Naive thymus-derived CD8-positive, alpha-beta T cell (primary cell): ENCODE measurements at regions of chr20 and their contacts with region 1.

Region 1: DNA sequence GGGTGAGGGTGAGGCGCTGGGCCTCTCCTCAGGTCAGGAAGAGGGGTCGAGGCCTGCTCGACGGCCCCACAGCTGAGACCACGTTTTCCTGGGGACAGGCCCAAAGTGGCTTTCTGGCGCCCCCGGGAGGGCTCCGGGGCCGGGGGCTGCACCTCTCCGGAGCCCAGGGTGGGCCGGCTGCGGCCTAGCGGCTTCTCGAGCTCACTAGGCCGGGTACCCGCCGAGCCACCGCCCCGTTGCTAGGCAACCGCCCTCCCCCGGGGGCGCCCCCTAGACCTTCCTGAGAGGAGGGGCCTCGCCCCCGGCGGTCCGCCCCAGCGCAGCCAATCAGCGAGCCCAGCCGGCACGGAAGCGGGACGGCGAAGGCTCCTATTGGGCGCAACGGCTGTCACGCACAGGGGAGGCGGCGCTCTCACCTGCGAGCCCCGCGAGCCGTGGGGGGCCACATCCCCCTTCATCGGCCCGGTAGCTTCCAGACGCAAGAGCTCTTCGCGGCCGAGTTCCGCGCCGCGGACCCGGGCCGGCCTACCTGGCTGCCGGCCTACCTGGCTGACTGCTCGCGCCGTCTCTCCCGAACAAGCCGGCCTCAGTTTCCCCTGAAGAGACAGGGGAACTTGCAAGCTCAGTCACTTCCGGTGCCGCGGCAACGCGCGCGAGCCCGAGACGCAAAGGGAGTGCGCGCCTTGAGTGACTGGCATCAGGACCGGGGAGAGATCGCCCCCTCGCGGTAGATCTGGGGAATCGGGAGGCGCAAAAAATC is 831 bp upstream of the BCL2L1 start:
- DNase-seq: peak; percentile 98 to 100 (median 99)
- ATAC-seq: peak; percentile 92 to 95
- H3K4me3 Mint-ChIP-seq: peak overlapping the region; percentile 90 to 96 (median 93)
- H3K27ac Mint-ChIP-seq: peak overlapping the region; percentile 73 to 98 (median 94)
- H3K4me1 Mint-ChIP-seq: peaks cover 29 to 52% (median 44%) of the 10 kb centered on the region in 4 donors
- H3K27me3 Mint-ChIP-seq: no peaks in the 10 kb centered on the region

Region 2: GRCh38 chr20:31572701-31573554 is 150.6 kb before region 1 on chr20:
- POLR2A ChIA-PET with region 1: interaction called, 14 read pairs
- DNase-seq: peak; percentile 65 to 88 (median 82)
- ATAC-seq: peak; percentile 86 to 87
- H3K4me3 Mint-ChIP-seq: peak overlapping the region; percentile 84 to 93 (median 90)
- H3K27ac Mint-ChIP-seq: peak overlapping the region; percentile 85 to 94 (median 90)
- H3K4me1 Mint-ChIP-seq: peaks cover 6 to 35% (median 25%) of the 10 kb centered on the region in 4 donors
- H3K27me3 Mint-ChIP-seq: no peaks in the 10 kb centered on the region

Region 3: GRCh38 chr20:31661625-31662371 is 61.7 kb before region 1 on chr20:
- POLR2A ChIA-PET with region 1: interaction called, 125 read pairs
- DNase-seq: peak; percentile 61 to 86 (median 76)
- ATAC-seq: peak; percentile 90 to 92
- H3K4me3 Mint-ChIP-seq: peak overlapping the region; percentile 69 to 85 (median 82)
- H3K27ac Mint-ChIP-seq: peak overlapping the region; percentile 44 to 94 (median 84)
- H3K4me1 Mint-ChIP-seq: peaks cover 21 to 38% (median 34%) of the 10 kb centered on the region in 4 donors
- H3K27me3 Mint-ChIP-seq: no peaks in the 10 kb centered on the region

Region 4: GRCh38 chr20:31674895-31675827 is 48.3 kb before region 1 on chr20:
- POLR2A ChIA-PET with region 1: interaction called, 32 read pairs
- DNase-seq: peak in 9 of 10 donors; percentile 41 to 77 (median 55)
- ATAC-seq: peak; percentile 81 to 87
- H3K4me3 Mint-ChIP-seq: peak overlapping the region; percentile 88 to 99 (median 98)
- H3K27ac Mint-ChIP-seq: peak overlapping the region; percentile 94 to 99 (median 98)
- H3K4me1 Mint-ChIP-seq: peaks cover 43 to 75% (median 67%) of the 10 kb centered on the region in 4 donors
- H3K27me3 Mint-ChIP-seq: no peaks in the 10 kb centered on the region

Region 5: GRCh38 chr20:31738729-31739561 is 15.4 kb after region 1 on chr20 and contains the start of gene TPX2:
- POLR2A ChIA-PET with region 1: interaction called, 12 read pairs
- DNase-seq: peak; percentile 39 to 83 (median 69)
- ATAC-seq: peak; percentile 86 to 98
- H3K4me3 Mint-ChIP-seq: peak within 1 kb of the TSS in 1 of 10 donors; percentile 43
- H3K27ac Mint-ChIP-seq: no peak within 1 kb of the TSS
- H3K4me1 Mint-ChIP-seq: no peaks in the 10 kb centered on the region
- H3K27me3 Mint-ChIP-seq: no peaks in the 10 kb centered on the region
- polyA plus RNA-seq, gene TPX2: 0.30 to 0.50 TPM in 2 of 3 donors, not detected in the other